ENCODE measurements at regions of chr10 and their contacts with region 1.

Region 1: DNA sequence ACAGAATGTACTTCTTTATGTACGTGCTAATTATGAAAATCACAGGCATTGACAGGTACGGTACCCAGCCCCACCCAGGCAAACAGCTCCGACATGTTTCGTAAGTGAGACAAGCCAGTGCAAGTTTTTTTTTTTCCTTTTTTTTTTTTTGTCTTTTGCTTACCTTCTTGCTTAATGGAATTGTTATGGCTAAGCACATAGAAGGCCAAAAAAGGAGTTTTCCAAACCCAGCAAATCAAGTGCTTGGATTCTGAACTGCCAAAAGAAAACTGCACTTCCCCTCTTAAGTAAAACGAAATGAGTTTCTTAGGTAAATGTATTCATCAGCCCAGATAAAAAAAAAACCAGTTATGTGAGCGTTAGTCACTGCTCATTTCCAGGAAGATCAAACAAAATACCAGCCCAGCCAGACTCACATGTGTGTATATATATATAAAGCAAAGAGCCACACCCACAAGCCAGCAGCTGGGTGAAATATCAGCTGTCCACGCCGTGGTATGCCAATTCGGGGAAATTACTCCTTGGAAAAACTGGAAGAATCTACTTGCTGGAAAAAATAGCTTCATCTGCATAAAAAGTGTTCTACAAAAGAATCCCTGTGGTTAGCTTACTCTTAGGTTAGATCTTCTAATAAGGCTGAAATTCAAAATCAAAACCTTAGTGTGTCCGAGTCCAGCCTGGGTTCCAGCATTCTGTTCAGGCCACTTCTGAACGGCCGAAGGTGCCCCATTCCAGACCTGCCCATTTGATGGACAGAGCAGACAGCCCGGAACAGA is 8.0 kb downstream of the KLF6 start:
- DNase-seq: peak; percentile 92
- H3K4me3 Mint-ChIP-seq: peak overlapping the region; percentile 44
- H3K27ac Mint-ChIP-seq: peak overlapping the region; percentile 75
- H3K4me1 Mint-ChIP-seq: peaks cover 45% of the 10 kb centered on the region
- H3K27me3 Mint-ChIP-seq: no peaks in the 10 kb centered on the region
- CTCF ChIP-seq: no peak

Region 2: GRCh38 chr10:3239066-3239919 is 537.7 kb before region 1 on chr10:
- CTCF ChIA-PET with region 1: interaction called, 4 read pairs
- POLR2A ChIA-PET with region 1: no interaction called
- intact Hi-C with region 1: loop called (anchors 2 kb)
- DNase-seq: peak; percentile 67
- H3K4me3 Mint-ChIP-seq: no peak overlapping the region
- H3K27ac Mint-ChIP-seq: peak overlapping the region; percentile 37
- H3K4me1 Mint-ChIP-seq: peaks cover 5% of the 10 kb centered on the region
- H3K27me3 Mint-ChIP-seq: no peaks in the 10 kb centered on the region
- CTCF ChIP-seq: peak; percentile 89

Region 3: DNA sequence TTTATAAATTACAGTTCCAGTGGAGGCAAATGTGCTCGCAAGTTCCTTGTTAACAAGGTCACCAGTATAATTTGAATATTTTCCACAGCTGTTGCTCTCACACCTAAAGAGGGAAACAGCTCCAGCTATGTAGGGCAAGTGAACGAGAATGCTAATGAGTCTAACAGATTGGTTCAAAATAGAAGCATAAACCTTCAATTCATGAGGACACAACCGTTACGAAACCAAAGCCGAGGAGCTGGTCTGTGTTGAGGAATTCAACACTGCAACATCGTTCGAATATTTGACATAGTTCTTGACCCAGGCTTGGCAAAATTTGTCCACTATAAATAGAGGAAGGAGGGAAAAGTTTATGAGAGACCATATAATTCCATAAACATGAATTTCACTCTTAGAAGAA is 153.2 kb before region 1 on chr10:
- CTCF ChIA-PET with region 1: interaction called, 3 read pairs
- POLR2A ChIA-PET with region 1: interaction called, 4 read pairs
- intact Hi-C with region 1: loop called (anchors 10 kb)
- DNase-seq: peak; percentile 76
- H3K4me3 Mint-ChIP-seq: peak overlapping the region; percentile 47
- H3K27ac Mint-ChIP-seq: peak overlapping the region; percentile 82
- H3K4me1 Mint-ChIP-seq: peaks cover 11% of the 10 kb centered on the region
- H3K27me3 Mint-ChIP-seq: no peaks in the 10 kb centered on the region
- CTCF ChIP-seq: no peak

Region 4: GRCh38 chr10:3757638-3758490 is 19.1 kb before region 1 on chr10:
- CTCF ChIA-PET with region 1: interaction called, 5 read pairs
- POLR2A ChIA-PET with region 1: interaction called, 208 read pairs
- intact Hi-C with region 1: no loop called
- DNase-seq: peak; percentile 91
- H3K4me3 Mint-ChIP-seq: peak overlapping the region; percentile 48
- H3K27ac Mint-ChIP-seq: peak overlapping the region; percentile 62
- H3K4me1 Mint-ChIP-seq: peaks cover 52% of the 10 kb centered on the region
- H3K27me3 Mint-ChIP-seq: no peaks in the 10 kb centered on the region
- CTCF ChIP-seq: no peak

Region 5: GRCh38 chr10:3852147-3852904 is 75.3 kb after region 1 on chr10:
- CTCF ChIA-PET with region 1: interaction called, 4 read pairs
- POLR2A ChIA-PET with region 1: interaction called, 348 read pairs
- intact Hi-C with region 1: loop called (anchors 1 kb)
- DNase-seq: peak; percentile 94
- H3K4me3 Mint-ChIP-seq: peak overlapping the region; percentile 54
- H3K27ac Mint-ChIP-seq: peak overlapping the region; percentile 98
- H3K4me1 Mint-ChIP-seq: peaks cover 33% of the 10 kb centered on the region
- H3K27me3 Mint-ChIP-seq: no peaks in the 10 kb centered on the region
- CTCF ChIP-seq: no peak